Aorta (tissue), 5 donors: ENCODE measurements at regions of chr7 and their contacts with region 1.

Region 1: GRCh38 chr7:143375298-143376034 is 5.7 kb upstream of the ZYX start:
- DNase-seq: peak in 1 of 2 donors; percentile 48
- ATAC-seq: no peak
- H3K4me3 ChIP-seq: no peak overlapping the region
- H3K27ac ChIP-seq: no peak overlapping the region
- H3K4me1 ChIP-seq: no peaks in the 10 kb centered on the region
- H3K27me3 ChIP-seq: no peaks in the 10 kb centered on the region

Region 2: GRCh38 chr7:143263266-143264195 is 111.9 kb before region 1 on chr7 and contains the start of gene GSTK1:
- intact Hi-C with region 1: no loop called
- DNase-seq: peak; percentile 91 to 94
- ATAC-seq: peak; percentile 97
- H3K4me3 ChIP-seq: peak within 1 kb of the TSS; percentile 63 to 68
- H3K27ac ChIP-seq: peak within 1 kb of the TSS in 1 of 2 donors; percentile 50
- H3K4me1 ChIP-seq: no peaks in the 10 kb centered on the region
- H3K27me3 ChIP-seq: no peaks in the 10 kb centered on the region
- total RNA-seq, gene GSTK1: 75.6 to 123 TPM

Region 3: GRCh38 chr7:143394790-143395602 is 19.5 kb after region 1 on chr7:
- intact Hi-C with region 1: no loop called
- DNase-seq: no peak
- ATAC-seq: no peak
- H3K4me3 ChIP-seq: no peak overlapping the region
- H3K27ac ChIP-seq: no peak overlapping the region
- H3K4me1 ChIP-seq: no peaks in the 10 kb centered on the region
- H3K27me3 ChIP-seq: no peaks in the 10 kb centered on the region

Region 4: DNA sequence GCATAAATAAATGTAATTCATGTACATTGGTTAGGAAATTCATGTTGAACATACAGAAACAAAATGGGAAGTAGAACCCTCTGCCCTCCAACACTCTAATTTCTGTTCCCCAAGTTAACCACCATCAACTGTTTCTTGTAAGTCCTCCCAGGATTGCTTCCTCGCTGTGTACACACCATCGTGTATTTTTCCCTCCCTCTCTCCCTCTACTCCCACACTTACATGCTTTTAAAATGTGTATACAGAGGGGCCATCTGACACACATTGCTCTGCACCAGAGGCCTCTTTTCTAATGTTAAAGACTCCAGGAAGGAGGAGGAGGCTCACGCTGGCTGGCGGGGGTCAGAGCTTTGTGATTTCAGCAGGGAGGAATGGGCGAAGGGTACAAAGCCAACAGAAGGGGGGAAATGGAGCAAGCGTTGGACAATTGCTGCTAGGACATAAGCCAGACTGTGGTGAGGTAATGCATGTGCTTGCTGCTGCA is 35.1 kb after region 1 on chr7:
- intact Hi-C with region 1: loop called in 1 of 2 experiments (anchors 5 kb)
- DNase-seq: peak in 1 of 2 donors; percentile 78
- ATAC-seq: peak; percentile 48
- H3K4me3 ChIP-seq: no peak overlapping the region
- H3K27ac ChIP-seq: no peak overlapping the region
- H3K4me1 ChIP-seq: no peaks in the 10 kb centered on the region
- H3K27me3 ChIP-seq: no peaks in the 10 kb centered on the region